Esophagus squamous epithelium (tissue), 5 donors: ENCODE measurements at regions of chr4 and their contacts with region 1.

Region 1: GRCh38 chr4:8403173-8403753 is 37.3 kb downstream of the ACOX3 start:
- DNase-seq: no peak
- H3K4me3 ChIP-seq: no peak overlapping the region
- H3K27ac ChIP-seq: peak overlapping the region; percentile 19 to 76 (median 72)
- H3K4me1 ChIP-seq: peaks cover 12 to 32% (median 20%) of the 10 kb centered on the region in 3 donors
- H3K27me3 ChIP-seq: no peaks in the 10 kb centered on the region
- CTCF ChIP-seq: peak; percentile 76 to 93 (median 92)
- POLR2A ChIP-seq: no peak

Region 2: DNA sequence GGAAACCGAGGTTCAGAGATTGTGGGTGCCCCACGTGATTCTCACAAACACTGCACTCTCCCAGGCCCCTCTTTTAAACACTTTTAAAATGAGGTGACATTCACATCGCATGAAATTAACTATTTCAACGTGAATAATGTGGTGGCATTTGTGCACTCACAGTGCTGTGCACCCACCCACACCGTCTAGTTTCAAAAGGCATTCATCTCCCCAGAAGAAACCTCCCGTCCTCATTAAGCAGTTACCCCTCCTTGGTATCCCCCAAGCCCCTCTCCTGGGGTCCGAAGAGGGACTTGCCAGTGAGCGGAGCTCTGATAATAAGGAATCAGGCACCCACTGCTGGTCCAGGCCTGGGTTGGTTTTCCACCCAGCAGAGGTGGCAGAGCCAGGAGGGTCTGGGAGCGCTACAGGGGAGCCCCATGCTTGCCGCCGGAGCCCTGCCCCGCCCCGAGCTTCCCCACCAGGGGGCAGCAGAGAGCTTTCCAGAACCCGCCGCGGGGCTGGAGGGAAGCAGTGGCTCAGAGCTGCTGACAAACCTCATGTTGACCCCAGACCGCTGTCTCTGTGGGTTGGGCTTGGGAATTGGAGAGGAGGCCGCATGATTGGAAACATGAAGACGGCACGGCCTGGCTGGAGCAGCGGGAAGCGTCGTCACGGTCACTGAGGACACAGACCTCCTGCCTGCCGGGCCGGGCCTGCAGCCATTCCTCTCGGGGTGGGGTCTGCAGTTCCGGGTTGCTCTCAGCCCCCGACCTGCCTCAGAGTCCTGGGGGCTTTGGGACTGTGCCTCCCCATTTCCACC is 161.2 kb before region 1 on chr4:
- intact Hi-C with region 1: loop called (anchors 5 kb)
- DNase-seq: peak; percentile 20
- H3K4me3 ChIP-seq: no peak overlapping the region
- H3K27ac ChIP-seq: peak overlapping the region in 2 of 4 donors; percentile 45 to 51
- H3K4me1 ChIP-seq: peaks cover 0 to 32% (median 11%) of the 10 kb centered on the region in 3 donors
- H3K27me3 ChIP-seq: no peaks in the 10 kb centered on the region
- CTCF ChIP-seq: peak; percentile 93 to 99 (median 94)
- POLR2A ChIP-seq: no peak